CD4-positive, alpha-beta memory T cell (primary cell): ENCODE measurements at regions of chr3 and their contacts with region 1.

Region 1: DNA sequence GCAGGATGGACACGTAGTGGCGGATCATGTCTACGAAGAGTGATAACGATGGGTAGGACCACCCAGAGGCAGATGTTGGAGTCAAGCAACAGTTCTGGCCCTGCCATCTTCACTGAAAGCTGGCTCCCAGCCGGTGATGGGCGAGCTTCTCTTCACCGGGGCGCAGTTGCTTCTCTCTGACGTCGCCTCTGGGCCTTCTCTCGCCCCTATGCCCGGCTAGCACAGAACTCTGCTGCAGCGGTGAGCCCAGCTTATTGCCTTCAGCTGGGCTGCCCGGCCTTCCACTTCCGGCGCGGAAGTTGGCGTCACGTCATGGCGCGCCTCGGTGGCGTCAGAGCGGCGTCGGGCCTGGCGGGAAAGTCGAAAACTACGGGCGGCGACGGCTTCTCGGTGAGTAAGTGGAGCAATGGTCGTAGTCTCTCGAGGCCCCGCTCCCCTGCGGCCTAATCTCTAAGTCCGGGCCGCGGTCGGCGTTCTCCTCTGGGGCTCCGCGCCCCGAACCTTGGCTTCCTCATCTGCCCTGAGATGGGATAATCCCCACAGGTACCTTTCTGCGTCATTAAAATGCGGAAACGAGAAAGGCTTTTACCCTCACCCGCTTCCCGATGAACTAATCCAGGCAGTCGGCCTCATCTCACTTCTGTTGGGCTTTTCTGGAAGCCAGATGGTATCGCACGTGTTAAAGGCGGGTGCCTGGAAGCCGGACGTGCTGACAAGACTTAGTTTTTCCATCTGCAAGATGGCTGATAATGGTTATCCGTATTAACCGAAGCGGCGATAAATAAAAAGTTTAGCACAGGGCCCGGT is at the start of gene FANCD2:
- DNase-seq: peak; percentile 91 to 96 (median 91)
- H3K4me3 ChIP-seq: peak within 1 kb of the TSS; percentile 84 to 88
- H3K4me3 Mint-ChIP-seq: peak within 1 kb of the TSS; percentile 94 to 99 (median 96)
- H3K27ac ChIP-seq: peak within 1 kb of the TSS; percentile 87
- H3K27ac Mint-ChIP-seq: peak within 1 kb of the TSS; percentile 97 to 99 (median 98)
- H3K4me1 ChIP-seq: peaks cover 25% of the 10 kb centered on the region
- H3K4me1 Mint-ChIP-seq: peaks cover 9 to 43% (median 19%) of the 10 kb centered on the region in 4 donors
- H3K27me3 ChIP-seq: no peaks in the 10 kb centered on the region
- H3K27me3 Mint-ChIP-seq: no peaks in the 10 kb centered on the region
- total RNA-seq, gene FANCD2: 28.1 to 28.3 TPM

Region 2: GRCh38 chr3:10010486-10011465 is 15.5 kb before region 1 on chr3:
- CTCF ChIA-PET with region 1: no interaction called
- POLR2A ChIA-PET with region 1: interaction called, 4 read pairs
- intact Hi-C with region 1: loop called (anchors 2 kb)
- DNase-seq: peak; percentile 64 to 86 (median 65)
- H3K4me3 ChIP-seq: peak overlapping the region in 1 of 2 donors; percentile 46
- H3K4me3 Mint-ChIP-seq: peak overlapping the region; percentile 67 to 87 (median 75)
- H3K27ac ChIP-seq: no peak overlapping the region
- H3K27ac Mint-ChIP-seq: peak overlapping the region; percentile 11 to 91 (median 58)
- H3K4me1 ChIP-seq: peaks cover 22% of the 10 kb centered on the region
- H3K4me1 Mint-ChIP-seq: peaks cover 8 to 32% (median 17%) of the 10 kb centered on the region in 4 donors
- H3K27me3 ChIP-seq: no peaks in the 10 kb centered on the region
- H3K27me3 Mint-ChIP-seq: no peaks in the 10 kb centered on the region

Region 3: GRCh38 chr3:10041034-10041433 is 14.7 kb after region 1 on chr3:
- CTCF ChIA-PET with region 1: no interaction called
- POLR2A ChIA-PET with region 1: no interaction called
- intact Hi-C with region 1: no loop called
- DNase-seq: no peak
- H3K4me3 ChIP-seq: no peak overlapping the region
- H3K4me3 Mint-ChIP-seq: no peak overlapping the region
- H3K27ac ChIP-seq: no peak overlapping the region
- H3K27ac Mint-ChIP-seq: no peak overlapping the region
- H3K4me1 ChIP-seq: no peaks in the 10 kb centered on the region
- H3K4me1 Mint-ChIP-seq: no peaks in the 10 kb centered on the region
- H3K27me3 ChIP-seq: no peaks in the 10 kb centered on the region
- H3K27me3 Mint-ChIP-seq: no peaks in the 10 kb centered on the region

Region 4: DNA sequence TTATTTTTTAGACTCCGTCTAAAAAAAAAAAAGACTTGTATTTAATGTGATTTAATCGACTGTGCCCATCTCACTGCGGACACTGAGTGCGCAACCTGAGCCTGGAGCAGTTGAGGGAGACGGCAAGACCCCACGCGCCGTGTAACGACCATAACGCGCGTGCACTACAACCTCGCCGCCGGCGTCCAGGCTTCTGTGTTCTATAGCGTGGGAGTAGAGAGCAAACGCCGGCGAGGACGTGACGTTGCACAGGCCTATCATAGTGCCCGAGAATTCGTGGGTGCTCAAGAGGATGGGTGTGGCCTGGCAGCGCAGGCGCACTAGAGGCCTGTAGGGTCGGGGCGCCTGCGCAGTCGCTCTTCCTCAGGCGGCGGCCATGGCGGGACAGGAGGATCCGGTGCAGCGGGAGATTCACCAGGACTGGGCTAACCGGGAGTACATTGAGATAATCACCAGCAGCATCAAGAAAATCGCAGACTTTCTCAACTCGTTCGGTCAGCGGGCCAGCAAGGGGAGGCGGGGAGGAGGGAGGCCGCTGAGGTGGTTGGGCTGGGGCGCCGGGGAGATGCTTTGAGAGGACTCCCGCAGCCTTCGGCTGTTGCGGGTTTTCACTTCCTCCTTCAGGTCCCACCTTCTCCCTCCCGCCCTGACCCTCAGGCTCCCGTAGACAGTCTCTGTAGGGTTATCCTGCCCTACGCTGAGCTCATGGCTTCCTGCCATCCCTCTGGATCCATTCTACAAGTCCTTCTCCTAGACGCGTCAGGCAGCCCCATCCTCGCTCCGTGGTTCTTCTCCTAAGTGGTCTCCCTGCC is 89.2 kb after region 1 on chr3 and contains the start of gene BRK1:
- CTCF ChIA-PET with region 1: no interaction called
- POLR2A ChIA-PET with region 1: no interaction called
- intact Hi-C with region 1: loop called (anchors 1 kb)
- DNase-seq: peak; percentile 89 to 95 (median 93)
- H3K4me3 ChIP-seq: peak within 1 kb of the TSS; percentile 89 to 98
- H3K4me3 Mint-ChIP-seq: peak within 1 kb of the TSS; percentile 95 to 100 (median 99)
- H3K27ac ChIP-seq: peak within 1 kb of the TSS; percentile 84
- H3K27ac Mint-ChIP-seq: peak within 1 kb of the TSS; percentile 96 to 100 (median 98)
- H3K4me1 ChIP-seq: peaks cover 39% of the 10 kb centered on the region
- H3K4me1 Mint-ChIP-seq: peaks cover 22 to 52% (median 31%) of the 10 kb centered on the region in 4 donors
- H3K27me3 ChIP-seq: no peaks in the 10 kb centered on the region
- H3K27me3 Mint-ChIP-seq: peaks cover 0 to 1% of the 10 kb centered on the region in 2 donors
- total RNA-seq, gene BRK1: 73.0 to 78.1 TPM

Region 5: DNA sequence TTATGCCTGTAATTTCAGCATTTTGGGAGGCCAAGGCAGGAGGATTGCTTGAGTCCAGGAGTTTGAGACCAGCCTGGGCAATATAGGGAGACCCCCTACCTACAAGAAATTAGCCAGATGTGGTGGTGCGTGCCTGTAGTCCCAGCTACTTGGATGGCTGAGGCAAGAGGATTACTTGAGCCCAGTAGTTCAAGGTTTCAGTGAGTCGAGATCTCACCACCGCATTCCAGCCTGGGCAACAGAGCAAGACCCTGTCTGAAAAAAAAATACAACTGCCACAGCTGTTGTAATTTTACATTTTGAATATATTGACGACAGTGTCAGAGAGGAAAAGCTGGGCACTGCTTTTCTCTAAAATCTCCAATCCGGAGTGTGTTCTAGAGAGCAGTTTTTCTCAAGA is 243.2 kb after region 1 on chr3:
- CTCF ChIA-PET with region 1: no interaction called
- POLR2A ChIA-PET with region 1: no interaction called
- intact Hi-C with region 1: no loop called
- DNase-seq: no peak
- H3K4me3 ChIP-seq: no peak overlapping the region
- H3K4me3 Mint-ChIP-seq: no peak overlapping the region
- H3K27ac ChIP-seq: no peak overlapping the region
- H3K27ac Mint-ChIP-seq: peak overlapping the region in 4 of 7 donors; percentile 3 to 57 (median 38)
- H3K4me1 ChIP-seq: peaks cover 71% of the 10 kb centered on the region
- H3K4me1 Mint-ChIP-seq: peaks cover 36 to 89% (median 60%) of the 10 kb centered on the region in 4 donors
- H3K27me3 ChIP-seq: no peaks in the 10 kb centered on the region
- H3K27me3 Mint-ChIP-seq: no peaks in the 10 kb centered on the region